ENCODE measurements at regions of chr2 and their contacts with region 1.

Region 1: DNA sequence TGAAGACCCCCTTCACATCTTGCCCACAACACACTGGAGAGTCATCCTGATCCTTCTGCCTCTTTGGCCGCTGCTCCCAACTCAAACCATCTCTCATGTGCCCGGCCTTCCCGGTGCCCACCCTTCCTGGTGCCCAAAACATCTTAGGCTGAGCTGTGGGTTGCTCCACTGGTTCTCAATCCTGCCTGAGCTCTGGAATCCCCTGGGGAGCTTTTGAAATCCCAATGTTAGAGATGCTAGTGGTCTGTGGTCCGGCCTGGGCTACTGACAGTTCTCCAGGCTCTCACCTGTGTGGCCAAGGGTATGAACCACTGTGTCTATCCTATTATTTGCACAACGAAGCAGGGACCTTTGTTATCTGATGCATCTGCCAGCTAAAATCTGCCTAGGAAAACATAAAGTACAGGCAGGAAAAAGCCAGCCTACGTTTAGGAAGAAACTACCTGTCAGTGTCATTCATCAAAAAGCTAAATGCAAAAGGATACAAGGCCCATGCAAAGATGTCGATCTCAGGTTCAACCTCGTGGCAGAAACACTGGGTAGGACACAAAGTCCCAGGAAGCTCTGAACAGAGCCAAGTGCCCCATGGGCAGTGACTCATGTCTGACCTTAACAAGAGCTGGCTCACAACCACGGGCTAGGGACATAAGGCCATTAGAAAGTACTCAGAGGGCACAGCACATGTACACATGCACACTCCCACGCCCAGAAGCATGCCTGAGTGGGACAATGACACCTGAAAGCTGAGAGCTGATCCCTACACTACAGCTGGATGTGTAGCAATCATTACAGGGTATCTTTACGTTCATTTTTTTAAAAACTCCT is 30.8 kb downstream of the TBC1D8 start:
- DNase-seq: peak; percentile 85
- H3K4me3 ChIP-seq: no peak overlapping the region
- H3K27ac ChIP-seq: peak overlapping the region; percentile 80 to 81
- H3K4me1 ChIP-seq: peaks cover 31% of the 10 kb centered on the region
- H3K27me3 ChIP-seq: no peaks in the 10 kb centered on the region
- CTCF ChIP-seq: no peak
- POLR2A ChIP-seq: peak; percentile 25

Region 2: DNA sequence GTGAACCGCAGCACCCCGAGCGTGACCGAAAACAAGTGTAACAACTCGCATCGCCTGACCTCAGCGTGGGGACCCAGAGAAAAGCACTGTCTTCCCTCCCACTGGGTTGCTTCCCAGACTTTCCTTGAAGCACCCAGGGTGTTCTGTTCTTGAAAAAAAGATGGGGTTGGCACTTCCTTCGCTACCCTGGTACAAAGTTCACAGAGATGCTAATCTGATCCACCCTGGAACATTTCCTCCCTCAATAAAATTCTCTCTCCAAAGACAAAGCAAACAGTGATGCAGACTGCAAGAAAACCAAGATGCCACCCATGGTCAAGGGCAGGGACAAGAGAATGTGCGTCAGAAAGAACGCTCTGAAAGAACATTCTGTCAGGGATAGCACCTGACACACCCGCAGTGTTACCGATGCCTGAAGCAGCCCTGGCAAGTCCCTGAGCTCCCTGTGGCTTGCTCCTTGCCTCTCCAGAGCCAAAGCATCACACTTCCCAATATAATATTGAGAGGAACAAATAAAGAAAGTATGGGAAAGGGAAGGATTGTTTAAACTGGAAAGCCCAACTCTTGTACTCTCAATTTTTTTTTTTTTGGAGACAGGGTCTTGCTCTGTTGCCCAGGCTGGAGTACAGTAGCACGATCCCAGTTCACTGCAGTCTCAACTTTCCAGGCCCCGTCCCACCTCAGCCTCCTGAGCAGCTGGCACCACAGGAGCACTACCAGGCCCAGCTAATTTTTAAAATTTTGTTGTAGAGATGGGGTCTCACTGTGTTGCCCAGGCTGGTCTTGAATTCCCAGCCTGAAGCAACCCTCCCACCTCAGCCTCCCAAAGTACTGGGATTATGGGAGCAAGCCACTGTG is 39.9 kb before region 1 on chr2:
- intact Hi-C with region 1: loop called (anchors 5 kb)
- DNase-seq: peak; percentile 95
- H3K4me3 ChIP-seq: no peak overlapping the region
- H3K27ac ChIP-seq: peak overlapping the region; percentile 88 to 93
- H3K4me1 ChIP-seq: peaks cover 11% of the 10 kb centered on the region
- H3K27me3 ChIP-seq: no peaks in the 10 kb centered on the region
- CTCF ChIP-seq: peak in 1 of 4 experiments; percentile 6
- POLR2A ChIP-seq: no peak

Measured in prostate gland (tissue), 2 donors.